ENCODE measurements at regions of chr13 and their contacts with region 1.

Region 1: GRCh38 chr13:48233046-48233907 is at the start of gene ITM2B:
- DNase-seq: peak; percentile 68
- H3K4me3 Mint-ChIP-seq: peak within 1 kb of the TSS; percentile 89
- H3K27ac Mint-ChIP-seq: peak within 1 kb of the TSS; percentile 95
- H3K4me1 Mint-ChIP-seq: peaks cover 27% of the 10 kb centered on the region
- H3K27me3 Mint-ChIP-seq: peaks cover under 1% of the 10 kb centered on the region
- CTCF ChIP-seq: peak; percentile 40
- total RNA-seq, gene ITM2B: 144 and 179 TPM in 2 replicates

Region 2: DNA sequence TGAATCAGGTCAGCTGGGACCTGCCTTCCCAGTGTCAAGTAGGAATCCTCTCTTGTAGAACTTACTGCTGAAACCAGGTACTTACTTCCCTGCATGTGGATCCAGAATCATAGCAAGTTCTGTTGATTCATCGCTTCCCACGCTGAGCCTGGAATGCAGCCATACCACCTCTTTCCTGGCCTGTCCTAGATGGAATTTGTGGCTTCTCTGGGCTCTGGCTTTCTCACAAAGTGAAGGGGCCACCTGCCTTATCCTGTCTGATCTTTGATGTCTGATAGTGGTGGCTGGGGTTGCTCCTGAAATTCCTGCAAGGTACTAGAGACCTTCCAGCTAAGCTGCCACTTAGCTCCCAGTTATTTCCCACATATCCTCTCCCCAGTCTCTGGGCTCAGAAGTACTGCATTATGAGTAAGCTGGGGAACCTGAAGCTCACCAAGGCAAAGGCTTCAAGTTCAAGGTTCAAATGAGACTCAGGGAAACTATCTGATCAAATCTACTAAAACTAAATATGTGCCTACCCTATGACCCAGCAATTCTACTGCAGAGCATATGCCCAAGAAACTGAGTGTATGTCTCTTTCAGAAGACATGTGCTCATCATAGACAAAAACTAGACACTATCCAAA is 335.7 kb before region 1 on chr13:
- CTCF ChIA-PET with region 1: no interaction called
- POLR2A ChIA-PET with region 1: no interaction called
- intact Hi-C with region 1: no loop called
- DNase-seq: peak; percentile 47
- H3K4me3 Mint-ChIP-seq: no peak overlapping the region
- H3K27ac Mint-ChIP-seq: no peak overlapping the region
- H3K4me1 Mint-ChIP-seq: peaks cover 10% of the 10 kb centered on the region
- H3K27me3 Mint-ChIP-seq: no peaks in the 10 kb centered on the region
- CTCF ChIP-seq: no peak

Region 3: GRCh38 chr13:48050550-48050949 is 182.7 kb before region 1 on chr13:
- CTCF ChIA-PET with region 1: no interaction called
- POLR2A ChIA-PET with region 1: no interaction called
- intact Hi-C with region 1: no loop called
- DNase-seq: no peak
- H3K4me3 Mint-ChIP-seq: no peak overlapping the region
- H3K27ac Mint-ChIP-seq: no peak overlapping the region
- H3K4me1 Mint-ChIP-seq: no peaks in the 10 kb centered on the region
- H3K27me3 Mint-ChIP-seq: no peaks in the 10 kb centered on the region
- CTCF ChIP-seq: no peak

Region 4: DNA sequence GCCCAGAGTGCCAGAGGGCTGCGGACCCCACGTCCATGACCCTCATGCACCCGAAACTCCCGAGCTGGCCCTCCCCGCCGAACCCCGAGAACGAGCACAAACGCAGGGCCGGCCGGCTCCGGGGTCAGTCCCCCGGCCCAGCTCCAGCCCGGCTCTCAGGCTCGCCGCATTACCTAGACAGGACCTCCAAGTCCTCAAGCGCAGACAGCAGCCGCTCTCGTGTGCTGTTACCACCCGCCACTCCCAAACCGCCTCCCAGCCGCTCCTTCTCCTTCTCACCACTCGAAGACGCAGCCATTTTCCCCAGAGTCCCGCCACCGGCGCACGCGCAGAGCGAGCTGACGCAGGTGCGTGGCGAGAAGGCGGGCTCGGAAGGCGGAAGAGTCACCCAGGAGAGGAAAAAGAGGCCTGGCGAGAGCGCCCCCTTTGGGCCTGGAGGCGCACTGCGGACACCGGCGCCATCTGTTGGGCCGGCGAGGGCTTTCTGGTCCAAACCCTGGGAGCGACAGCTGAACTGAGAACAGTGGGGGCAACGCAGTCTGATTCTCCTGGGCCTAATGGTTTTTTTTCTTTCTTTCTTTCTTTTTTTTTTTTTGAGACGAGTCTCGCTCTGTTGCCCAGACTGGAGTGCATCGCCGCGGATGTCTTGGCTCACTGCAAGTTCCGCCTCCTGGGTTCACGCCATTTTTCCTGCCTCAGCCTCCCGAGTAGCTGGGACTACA is 138.3 kb before region 1 on chr13 and contains the start of gene MED4:
- CTCF ChIA-PET with region 1: interaction called, 5 read pairs
- POLR2A ChIA-PET with region 1: interaction called, 24 read pairs
- intact Hi-C with region 1: no loop called
- DNase-seq: peak; percentile 94
- H3K4me3 Mint-ChIP-seq: peak within 1 kb of the TSS; percentile 83
- H3K27ac Mint-ChIP-seq: peak within 1 kb of the TSS; percentile 96
- H3K4me1 Mint-ChIP-seq: peaks cover 13% of the 10 kb centered on the region
- H3K27me3 Mint-ChIP-seq: no peaks in the 10 kb centered on the region
- CTCF ChIP-seq: peak; percentile 99
- total RNA-seq, gene MED4: 45.2 and 56.5 TPM in 2 replicates

Region 5: GRCh38 chr13:48155848-48156247 is 77.4 kb before region 1 on chr13:
- CTCF ChIA-PET with region 1: interaction called, 3 read pairs
- POLR2A ChIA-PET with region 1: interaction called, 53 read pairs
- intact Hi-C with region 1: no loop called
- DNase-seq: peak; percentile 89
- H3K4me3 Mint-ChIP-seq: peak overlapping the region; percentile 23
- H3K27ac Mint-ChIP-seq: peak overlapping the region; percentile 78
- H3K4me1 Mint-ChIP-seq: peaks cover 43% of the 10 kb centered on the region
- H3K27me3 Mint-ChIP-seq: no peaks in the 10 kb centered on the region
- CTCF ChIP-seq: no peak

Region 6: DNA sequence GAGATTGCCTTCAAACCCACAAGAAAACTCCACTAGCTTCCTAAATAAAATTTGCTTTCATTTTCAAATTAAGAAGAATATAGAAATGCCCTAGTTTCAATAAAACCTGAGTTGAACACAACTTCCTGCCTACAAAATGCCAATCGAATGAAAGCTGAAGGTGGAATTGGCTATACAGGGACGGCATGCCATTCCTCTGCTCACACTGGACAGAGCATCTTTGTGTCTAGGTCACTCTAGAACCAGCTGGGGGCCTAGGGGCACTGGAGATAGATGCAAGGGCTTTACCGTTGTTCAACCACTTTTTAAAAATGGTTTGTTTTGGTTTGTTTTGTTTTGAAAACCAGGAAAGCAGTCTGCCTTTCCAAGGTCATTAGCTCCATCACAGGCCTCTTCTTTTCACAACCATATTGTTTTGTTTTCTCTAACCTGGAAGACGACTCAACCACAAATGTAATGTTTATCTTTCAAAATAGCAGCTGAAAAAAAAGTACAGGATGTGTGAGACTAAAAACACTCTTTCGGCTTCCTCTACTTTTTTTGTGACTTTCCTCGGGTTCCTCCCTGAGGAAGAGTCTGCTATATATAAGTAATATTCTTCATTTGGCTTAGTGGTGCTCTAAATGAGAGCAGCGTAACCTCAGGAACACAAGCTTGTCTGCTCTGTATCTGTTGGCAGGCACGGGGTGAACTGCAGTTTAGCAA is 12.1 kb before region 1 on chr13:
- CTCF ChIA-PET with region 1: interaction called, 9 read pairs
- POLR2A ChIA-PET with region 1: interaction called, 11 read pairs
- intact Hi-C with region 1: no loop called
- DNase-seq: peak; percentile 23
- H3K4me3 Mint-ChIP-seq: no peak overlapping the region
- H3K27ac Mint-ChIP-seq: no peak overlapping the region
- H3K4me1 Mint-ChIP-seq: peaks cover 9% of the 10 kb centered on the region
- H3K27me3 Mint-ChIP-seq: no peaks in the 10 kb centered on the region
- CTCF ChIP-seq: no peak

Region 7: GRCh38 chr13:48275507-48275906 is 42.2 kb after region 1 on chr13:
- CTCF ChIA-PET with region 1: no interaction called
- POLR2A ChIA-PET with region 1: no interaction called
- intact Hi-C with region 1: no loop called
- DNase-seq: peak; percentile 15
- H3K4me3 Mint-ChIP-seq: no peak overlapping the region
- H3K27ac Mint-ChIP-seq: no peak overlapping the region
- H3K4me1 Mint-ChIP-seq: no peaks in the 10 kb centered on the region
- H3K27me3 Mint-ChIP-seq: no peaks in the 10 kb centered on the region
- CTCF ChIP-seq: no peak

Region 8: DNA sequence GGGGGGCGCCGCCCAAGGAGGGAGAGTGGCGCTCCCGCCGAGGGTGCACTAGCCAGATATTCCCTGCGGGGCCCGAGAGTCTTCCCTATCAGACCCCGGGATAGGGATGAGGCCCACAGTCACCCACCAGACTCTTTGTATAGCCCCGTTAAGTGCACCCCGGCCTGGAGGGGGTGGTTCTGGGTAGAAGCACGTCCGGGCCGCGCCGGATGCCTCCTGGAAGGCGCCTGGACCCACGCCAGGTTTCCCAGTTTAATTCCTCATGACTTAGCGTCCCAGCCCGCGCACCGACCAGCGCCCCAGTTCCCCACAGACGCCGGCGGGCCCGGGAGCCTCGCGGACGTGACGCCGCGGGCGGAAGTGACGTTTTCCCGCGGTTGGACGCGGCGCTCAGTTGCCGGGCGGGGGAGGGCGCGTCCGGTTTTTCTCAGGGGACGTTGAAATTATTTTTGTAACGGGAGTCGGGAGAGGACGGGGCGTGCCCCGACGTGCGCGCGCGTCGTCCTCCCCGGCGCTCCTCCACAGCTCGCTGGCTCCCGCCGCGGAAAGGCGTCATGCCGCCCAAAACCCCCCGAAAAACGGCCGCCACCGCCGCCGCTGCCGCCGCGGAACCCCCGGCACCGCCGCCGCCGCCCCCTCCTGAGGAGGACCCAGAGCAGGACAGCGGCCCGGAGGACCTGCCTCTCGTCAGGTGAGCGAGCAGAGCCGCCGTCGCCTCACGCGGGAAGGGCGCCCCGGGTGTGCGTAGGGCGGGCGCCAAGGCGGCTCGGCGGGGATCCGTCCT is 70.3 kb after region 1 on chr13 and contains the start of gene RB1:
- CTCF ChIA-PET with region 1: no interaction called
- POLR2A ChIA-PET with region 1: interaction called, 92 read pairs
- intact Hi-C with region 1: loop called (anchors 1 kb)
- DNase-seq: peak; percentile 92
- H3K4me3 Mint-ChIP-seq: peak within 1 kb of the TSS; percentile 86
- H3K27ac Mint-ChIP-seq: peak within 1 kb of the TSS; percentile 97
- H3K4me1 Mint-ChIP-seq: peaks cover 16% of the 10 kb centered on the region
- H3K27me3 Mint-ChIP-seq: no peaks in the 10 kb centered on the region
- CTCF ChIP-seq: no peak
- total RNA-seq, gene RB1: 40.7 and 43.4 TPM in 2 replicates

Region 9: DNA sequence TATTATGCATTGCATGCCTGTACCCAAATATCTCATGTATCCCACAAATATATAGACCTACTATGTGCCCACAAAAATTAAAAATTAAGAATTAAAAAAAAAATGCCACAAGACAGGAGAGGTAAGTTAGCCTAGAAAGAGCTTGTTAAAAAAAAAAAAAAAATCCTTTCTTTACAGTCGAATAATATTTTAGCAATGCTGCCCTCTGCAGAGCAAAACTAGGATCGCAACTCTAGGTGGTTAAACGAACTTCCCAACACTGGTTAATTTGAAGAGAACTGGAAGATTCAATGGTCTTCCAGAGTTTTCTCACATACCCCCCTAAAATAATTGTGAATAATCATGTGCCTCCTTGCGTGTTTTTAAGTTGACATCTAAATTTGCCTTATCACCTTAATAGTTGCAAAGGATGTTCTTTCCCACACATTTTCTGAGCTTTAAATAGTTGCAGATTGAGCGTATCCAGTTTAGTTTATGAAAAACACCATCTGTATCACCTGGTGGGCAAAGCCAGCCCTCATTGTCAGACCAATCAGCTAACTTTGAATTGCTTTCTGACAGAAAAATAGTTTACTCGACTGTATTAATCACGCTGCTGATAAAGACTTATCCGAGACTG is 347.0 kb after region 1 on chr13:
- CTCF ChIA-PET with region 1: interaction called, 8 read pairs
- POLR2A ChIA-PET with region 1: interaction called, 11 read pairs
- intact Hi-C with region 1: loop called (anchors 2 kb)
- DNase-seq: peak; percentile 75
- H3K4me3 Mint-ChIP-seq: no peak overlapping the region
- H3K27ac Mint-ChIP-seq: no peak overlapping the region
- H3K4me1 Mint-ChIP-seq: peaks cover 5% of the 10 kb centered on the region
- H3K27me3 Mint-ChIP-seq: no peaks in the 10 kb centered on the region
- CTCF ChIP-seq: peak; percentile 68

Measured in MCF 10A (cell line).